ENCODE measurements at regions of chr4 and their contacts with region 1.

Region 1: GRCh38 chr4:89379511-89380044 is 72.0 kb upstream of the GPRIN3 start:
- DNase-seq: no peak
- H3K4me3 ChIP-seq: no peak overlapping the region
- CTCF ChIP-seq: no peak
- POLR2A ChIP-seq: no peak

Region 2: GRCh38 chr4:88967852-88968331 is 411.7 kb before region 1 on chr4:
- intact Hi-C with region 1: no loop called
- DNase-seq: no peak
- H3K4me3 ChIP-seq: no peak overlapping the region
- CTCF ChIP-seq: no peak
- POLR2A ChIP-seq: no peak

Region 3: DNA sequence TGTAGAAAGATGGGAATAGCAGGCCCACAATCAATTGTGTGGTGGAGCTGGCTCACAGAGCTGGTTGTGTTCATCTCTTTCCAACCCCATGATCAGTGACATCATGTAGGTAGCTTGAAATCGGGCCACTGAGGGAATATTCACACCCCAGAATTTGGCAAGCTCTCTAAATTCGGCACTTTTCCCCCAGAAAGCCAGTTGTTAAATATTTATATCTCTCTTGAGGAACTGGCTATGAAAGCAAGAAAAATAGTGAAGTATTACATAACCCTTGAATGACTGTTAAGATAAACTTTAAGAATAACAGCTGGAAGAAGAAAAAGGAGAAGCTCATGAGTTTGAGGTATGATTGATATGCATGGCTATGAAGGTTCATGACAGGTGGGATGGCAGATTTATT is 110.9 kb before region 1 on chr4:
- intact Hi-C with region 1: no loop called
- DNase-seq: no peak
- H3K4me3 ChIP-seq: no peak overlapping the region
- CTCF ChIP-seq: no peak
- POLR2A ChIP-seq: no peak

Region 4: DNA sequence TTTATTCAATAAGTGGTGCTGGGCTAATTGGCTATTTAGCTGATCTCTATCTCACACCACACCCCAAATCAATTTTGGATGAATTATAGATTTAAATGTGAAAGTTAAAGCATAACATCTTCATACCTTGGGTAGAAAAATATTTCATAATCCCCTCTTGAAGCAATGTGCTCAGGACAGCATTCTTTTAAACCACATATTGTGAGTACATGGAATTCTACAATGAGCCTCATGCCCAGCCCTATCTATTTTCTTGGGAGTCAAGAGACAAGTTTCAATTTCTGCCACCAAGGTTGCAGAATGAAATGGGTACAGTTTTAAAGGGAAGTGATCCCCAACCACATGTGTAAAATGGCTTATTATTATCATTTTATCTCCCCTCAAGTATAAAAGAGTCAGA is 41.4 kb before region 1 on chr4:
- intact Hi-C with region 1: loop called (anchors 1 kb)
- DNase-seq: no peak
- H3K4me3 ChIP-seq: no peak overlapping the region
- CTCF ChIP-seq: no peak
- POLR2A ChIP-seq: no peak